ENCODE measurements at regions of chr14 and their contacts with region 1.

Region 1: GRCh38 chr14:77151918-77152588 is 10.5 kb upstream of the ZDHHC22 start:
- DNase-seq: peak; percentile 68
- H3K4me3 ChIP-seq: no peak overlapping the region
- H3K27ac ChIP-seq: no peak overlapping the region
- H3K4me1 ChIP-seq: peaks cover 9% of the 10 kb centered on the region
- H3K27me3 ChIP-seq: peaks cover 20% of the 10 kb centered on the region
- CTCF ChIP-seq: peak; percentile 28; the same call in 1 of the 2 replicates

Region 2: GRCh38 chr14:76767681-76768656 is 384.1 kb before region 1 on chr14:
- CTCF ChIA-PET with region 1: no interaction called
- POLR2A ChIA-PET with region 1: no interaction called
- intact Hi-C with region 1: no loop called
- DNase-seq: no peak
- H3K4me3 ChIP-seq: no peak overlapping the region
- H3K27ac ChIP-seq: no peak overlapping the region
- H3K4me1 ChIP-seq: no peaks in the 10 kb centered on the region
- H3K27me3 ChIP-seq: no peaks in the 10 kb centered on the region
- CTCF ChIP-seq: no peak

Region 3: DNA sequence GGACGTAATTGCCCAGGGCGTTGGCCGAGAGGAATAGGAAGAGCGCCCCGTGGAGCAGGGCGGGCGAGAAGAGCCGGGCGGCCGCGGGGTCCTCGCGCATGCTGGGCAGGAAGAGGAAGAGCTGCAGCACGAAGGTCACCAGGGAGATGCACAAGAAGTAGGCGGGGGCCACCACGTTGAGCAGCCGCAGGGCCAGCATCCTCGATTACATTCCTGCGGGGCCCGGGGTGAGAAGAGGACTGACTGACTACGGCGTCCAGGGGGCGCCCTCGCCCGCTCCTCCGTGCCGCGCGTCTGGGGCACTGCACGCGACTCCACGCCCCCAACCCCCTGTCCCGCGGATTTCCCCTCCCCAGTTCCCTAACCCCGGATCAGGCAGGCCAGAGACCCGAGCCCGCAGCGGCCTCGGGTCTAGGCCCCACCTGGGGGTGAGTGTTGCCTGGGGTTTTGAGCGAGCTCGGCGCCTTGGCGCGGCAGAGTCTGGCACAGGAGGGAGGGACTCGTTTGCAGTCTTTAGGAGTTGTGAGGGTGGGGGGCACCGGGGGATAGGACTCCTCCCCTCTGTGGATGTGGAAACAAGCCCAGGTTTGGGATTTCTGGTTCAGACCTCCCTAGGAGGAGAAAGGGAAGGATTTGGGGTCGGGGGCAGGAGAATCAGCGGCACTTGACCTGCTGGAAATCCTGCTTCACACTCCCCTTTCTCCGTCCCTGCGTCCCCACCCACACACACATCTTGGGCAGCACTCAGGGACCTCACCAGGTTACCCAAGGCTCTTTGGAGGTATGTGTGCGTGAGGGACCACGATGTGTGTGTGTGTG is 12.3 kb before region 1 on chr14:
- CTCF ChIA-PET with region 1: interaction called, 13 read pairs
- POLR2A ChIA-PET with region 1: no interaction called
- intact Hi-C with region 1: no loop called
- DNase-seq: peak; percentile 72
- H3K4me3 ChIP-seq: peak overlapping the region; percentile 42
- H3K27ac ChIP-seq: no peak overlapping the region
- H3K4me1 ChIP-seq: peaks cover 6% of the 10 kb centered on the region
- H3K27me3 ChIP-seq: peaks cover 53% of the 10 kb centered on the region
- CTCF ChIP-seq: peak; percentile 80

Region 4: GRCh38 chr14:77314043-77314442 is 162.0 kb after region 1 on chr14:
- CTCF ChIA-PET with region 1: interaction called, 26 read pairs
- POLR2A ChIA-PET with region 1: no interaction called
- intact Hi-C with region 1: loop called (anchors 1 kb)
- DNase-seq: no peak
- H3K4me3 ChIP-seq: no peak overlapping the region
- H3K27ac ChIP-seq: no peak overlapping the region
- H3K4me1 ChIP-seq: peaks cover 8% of the 10 kb centered on the region
- H3K27me3 ChIP-seq: no peaks in the 10 kb centered on the region
- CTCF ChIP-seq: no peak

Region 5: GRCh38 chr14:77457522-77458290 is 305.7 kb after region 1 on chr14 and contains the starts of genes AHSA1 and VIPAS39:
- CTCF ChIA-PET with region 1: no interaction called
- POLR2A ChIA-PET with region 1: no interaction called
- intact Hi-C with region 1: loop called (anchors 2 kb)
- DNase-seq: peak; percentile 99
- H3K4me3 ChIP-seq: peak within 1 kb of the TSS; percentile 88
- H3K27ac ChIP-seq: peak within 1 kb of the TSS; percentile 95
- H3K4me1 ChIP-seq: peaks cover 14% of the 10 kb centered on the region
- H3K27me3 ChIP-seq: no peaks in the 10 kb centered on the region
- CTCF ChIP-seq: no peak
- total RNA-seq, gene AHSA1: 276 and 375 TPM in 2 replicates
- total RNA-seq, gene VIPAS39: 16.7 and 19.8 TPM in 2 replicates

Region 6: GRCh38 chr14:78612666-78613065 is 1460.6 kb after region 1 on chr14:
- CTCF ChIA-PET with region 1: no interaction called
- POLR2A ChIA-PET with region 1: interaction called, 10 read pairs
- intact Hi-C with region 1: no loop called
- DNase-seq: no peak
- H3K4me3 ChIP-seq: no peak overlapping the region
- H3K27ac ChIP-seq: no peak overlapping the region
- H3K4me1 ChIP-seq: no peaks in the 10 kb centered on the region
- H3K27me3 ChIP-seq: no peaks in the 10 kb centered on the region
- CTCF ChIP-seq: no peak

Measured in A673 (cell line).